B cell (primary cell): ENCODE measurements at regions of chr5 and their contacts with region 1.

Region 1: GRCh38 chr5:172697123-172698121 is 56.4 kb downstream of the NEURL1B start:
- DNase-seq: peak; percentile 88
- ATAC-seq: peak; percentile 97
- H3K4me3 ChIP-seq: peak overlapping the region; percentile 3 to 73 (median 64)
- H3K4me3 Mint-ChIP-seq: peak overlapping the region; percentile 92
- H3K27ac ChIP-seq: peak overlapping the region; percentile 53 to 57
- H3K27ac Mint-ChIP-seq: peak overlapping the region; percentile 87
- H3K4me1 ChIP-seq: peaks cover 13 to 23% of the 10 kb centered on the region in 2 donors
- H3K4me1 Mint-ChIP-seq: peaks cover 19% of the 10 kb centered on the region
- H3K27me3 ChIP-seq: peaks cover 0 to 16% (median 7%) of the 10 kb centered on the region in 4 experiments
- H3K27me3 Mint-ChIP-seq: peaks cover 21% of the 10 kb centered on the region
- CTCF ChIP-seq: peak; percentile 86

Region 2: DNA sequence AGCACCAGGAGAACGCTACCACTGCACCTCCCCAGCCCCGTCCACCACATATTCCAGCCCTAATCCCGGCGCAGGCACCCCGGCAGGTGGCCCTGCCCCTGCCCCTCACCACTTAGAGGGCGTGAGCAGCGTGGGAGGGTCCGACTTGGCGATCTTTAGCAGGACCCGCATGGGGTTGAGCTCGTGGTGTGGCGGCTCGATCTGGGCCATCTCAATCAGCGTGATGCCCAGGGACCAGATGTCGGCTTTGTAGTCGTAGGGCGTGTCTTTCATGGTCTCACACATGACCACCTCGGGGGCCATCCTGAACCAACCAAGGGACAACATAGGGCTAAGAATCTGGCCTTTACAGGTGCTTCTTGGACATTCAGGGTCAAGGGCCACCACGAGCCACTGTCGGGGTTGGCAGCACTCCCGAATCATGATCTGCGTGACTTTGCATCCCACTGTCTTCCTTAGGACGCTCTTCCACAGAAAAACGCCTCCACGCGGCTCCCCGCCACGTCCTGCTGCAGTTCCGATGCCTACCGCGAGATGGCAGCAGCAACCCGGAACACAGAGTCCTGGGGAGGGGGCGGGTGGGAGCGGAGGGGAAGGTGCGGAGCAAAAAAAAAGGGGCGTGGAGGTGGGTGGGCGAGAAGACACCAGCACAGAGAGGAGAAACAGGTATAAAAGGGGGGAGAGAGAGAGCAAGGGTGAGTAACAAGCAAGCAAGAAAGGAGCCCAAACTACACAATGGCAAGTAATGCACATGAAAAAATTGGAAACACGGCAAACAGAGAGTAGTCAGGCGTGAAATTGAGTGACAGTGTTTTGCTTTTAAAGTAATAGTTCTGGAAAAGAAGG is 590.7 kb before region 1 on chr5:
- CTCF ChIA-PET with region 1: interaction called, 4 read pairs
- POLR2A ChIA-PET with region 1: no interaction called
- intact Hi-C with region 1: loop called (anchors 10 kb)
- DNase-seq: peak; percentile 76
- ATAC-seq: no peak
- H3K4me3 ChIP-seq: no peak overlapping the region
- H3K4me3 Mint-ChIP-seq: no peak overlapping the region
- H3K27ac ChIP-seq: peak overlapping the region in 1 of 2 donors; percentile 41
- H3K27ac Mint-ChIP-seq: peak overlapping the region; percentile 70
- H3K4me1 ChIP-seq: peaks cover 31 to 40% of the 10 kb centered on the region in 2 donors
- H3K4me1 Mint-ChIP-seq: peaks cover 35% of the 10 kb centered on the region
- H3K27me3 ChIP-seq: no peaks in the 10 kb centered on the region
- H3K27me3 Mint-ChIP-seq: no peaks in the 10 kb centered on the region
- CTCF ChIP-seq: peak; percentile 92

Region 3: DNA sequence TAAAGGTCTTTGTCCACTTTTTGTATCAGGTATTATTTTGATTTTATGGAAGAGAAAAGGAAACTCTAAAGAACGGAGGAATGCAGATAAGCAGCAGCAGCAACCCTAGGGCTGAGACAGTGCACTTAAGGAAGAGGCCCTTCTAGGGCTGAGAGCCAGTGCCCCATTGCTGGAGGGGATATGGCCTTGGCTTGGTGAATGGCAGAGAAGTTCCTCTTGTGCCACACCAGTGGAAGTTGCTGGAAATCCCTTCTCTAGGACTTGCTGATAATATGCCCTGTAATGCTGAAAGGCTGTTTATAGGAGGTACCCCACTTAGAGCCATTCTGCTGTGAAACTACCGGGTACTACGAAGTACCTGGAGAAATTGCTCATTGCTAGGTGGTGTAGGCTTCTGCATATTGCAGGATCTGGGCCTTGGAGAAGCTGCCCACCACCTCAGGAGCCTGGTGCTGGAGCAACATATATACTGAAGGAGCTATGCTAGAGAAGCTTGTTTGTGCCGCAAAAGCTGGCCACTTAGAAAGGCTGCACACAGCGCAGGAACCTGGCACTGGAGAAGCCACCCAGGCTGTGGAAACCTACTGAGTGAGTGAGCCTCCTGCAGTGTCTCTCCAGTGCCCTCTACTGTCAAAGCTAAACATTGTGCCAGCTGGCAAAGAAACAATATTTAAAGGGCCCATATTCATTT is 404.2 kb before region 1 on chr5:
- CTCF ChIA-PET with region 1: interaction called, 3 read pairs
- POLR2A ChIA-PET with region 1: no interaction called
- intact Hi-C with region 1: loop called (anchors 10 kb)
- DNase-seq: peak; percentile 71
- ATAC-seq: peak; percentile 99
- H3K4me3 ChIP-seq: no peak overlapping the region
- H3K4me3 Mint-ChIP-seq: no peak overlapping the region
- H3K27ac ChIP-seq: no peak overlapping the region
- H3K27ac Mint-ChIP-seq: no peak overlapping the region
- H3K4me1 ChIP-seq: no peaks in the 10 kb centered on the region
- H3K4me1 Mint-ChIP-seq: peaks cover 3% of the 10 kb centered on the region
- H3K27me3 ChIP-seq: no peaks in the 10 kb centered on the region
- H3K27me3 Mint-ChIP-seq: peaks cover 8% of the 10 kb centered on the region
- CTCF ChIP-seq: peak; percentile 85

Region 4: DNA sequence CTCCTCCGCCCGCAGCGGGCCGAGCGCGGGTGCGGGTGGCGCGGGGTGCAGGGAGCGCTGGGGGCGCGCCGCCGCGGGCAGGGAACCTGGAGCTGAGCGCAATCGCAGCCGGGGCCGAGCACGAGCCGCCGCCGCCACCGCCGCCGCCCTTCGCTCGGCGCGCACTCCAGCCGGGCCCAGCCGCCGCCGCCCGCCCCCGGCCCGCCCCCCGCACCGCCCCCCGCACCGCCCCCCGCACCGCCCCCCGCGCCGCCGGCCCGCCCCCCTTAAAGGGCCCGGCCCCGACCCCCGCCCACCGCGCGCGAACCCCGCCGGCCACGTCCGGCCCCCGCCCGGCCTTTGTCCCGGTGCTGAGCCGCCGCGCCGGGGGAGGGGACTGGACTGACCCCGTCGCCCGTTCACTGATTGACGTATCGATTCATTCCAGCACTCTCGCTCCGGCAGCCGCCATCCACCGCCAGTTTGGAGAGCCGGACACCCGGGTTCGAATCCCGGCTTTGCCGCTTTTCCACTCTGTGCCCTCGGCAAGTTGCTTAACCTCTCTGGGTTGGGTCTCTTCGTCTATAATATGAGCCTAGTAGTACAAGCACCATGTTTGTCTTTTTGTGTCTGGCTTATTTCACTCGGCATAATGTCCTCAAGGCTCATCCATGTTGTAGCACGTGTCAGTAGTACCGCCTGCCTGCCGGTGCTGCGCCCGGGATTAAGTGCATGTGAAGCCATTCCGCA is 242.9 kb before region 1 on chr5 and contains the start of gene SH3PXD2B:
- CTCF ChIA-PET with region 1: interaction called, 53 read pairs
- POLR2A ChIA-PET with region 1: no interaction called
- intact Hi-C with region 1: no loop called
- DNase-seq: peak; percentile 47
- ATAC-seq: peak; percentile 76
- H3K4me3 ChIP-seq: peak within 1 kb of the TSS in 4 of 5 experiments; percentile 17 to 52 (median 47)
- H3K4me3 Mint-ChIP-seq: peak within 1 kb of the TSS; percentile 84
- H3K27ac ChIP-seq: no peak within 1 kb of the TSS
- H3K27ac Mint-ChIP-seq: no peak within 1 kb of the TSS
- H3K4me1 ChIP-seq: peaks cover 7 to 8% of the 10 kb centered on the region in 2 donors
- H3K4me1 Mint-ChIP-seq: peaks cover 12% of the 10 kb centered on the region
- H3K27me3 ChIP-seq: peaks cover 0 to 52% (median 19%) of the 10 kb centered on the region in 4 experiments
- H3K27me3 Mint-ChIP-seq: peaks cover 59% of the 10 kb centered on the region
- CTCF ChIP-seq: no peak
- total RNA-seq, gene SH3PXD2B: not detected in 2 replicates

Region 5: GRCh38 chr5:172479044-172479783 is 218.2 kb before region 1 on chr5:
- CTCF ChIA-PET with region 1: interaction called, 23 read pairs
- POLR2A ChIA-PET with region 1: no interaction called
- intact Hi-C with region 1: no loop called
- DNase-seq: peak; percentile 54
- ATAC-seq: peak; percentile 56
- H3K4me3 ChIP-seq: no peak overlapping the region
- H3K4me3 Mint-ChIP-seq: no peak overlapping the region
- H3K27ac ChIP-seq: no peak overlapping the region
- H3K27ac Mint-ChIP-seq: no peak overlapping the region
- H3K4me1 ChIP-seq: no peaks in the 10 kb centered on the region
- H3K4me1 Mint-ChIP-seq: no peaks in the 10 kb centered on the region
- H3K27me3 ChIP-seq: peaks cover 0 to 3% (median under 1%) of the 10 kb centered on the region in 4 experiments
- H3K27me3 Mint-ChIP-seq: peaks cover 6% of the 10 kb centered on the region
- CTCF ChIP-seq: peak; percentile 42

Region 6: DNA sequence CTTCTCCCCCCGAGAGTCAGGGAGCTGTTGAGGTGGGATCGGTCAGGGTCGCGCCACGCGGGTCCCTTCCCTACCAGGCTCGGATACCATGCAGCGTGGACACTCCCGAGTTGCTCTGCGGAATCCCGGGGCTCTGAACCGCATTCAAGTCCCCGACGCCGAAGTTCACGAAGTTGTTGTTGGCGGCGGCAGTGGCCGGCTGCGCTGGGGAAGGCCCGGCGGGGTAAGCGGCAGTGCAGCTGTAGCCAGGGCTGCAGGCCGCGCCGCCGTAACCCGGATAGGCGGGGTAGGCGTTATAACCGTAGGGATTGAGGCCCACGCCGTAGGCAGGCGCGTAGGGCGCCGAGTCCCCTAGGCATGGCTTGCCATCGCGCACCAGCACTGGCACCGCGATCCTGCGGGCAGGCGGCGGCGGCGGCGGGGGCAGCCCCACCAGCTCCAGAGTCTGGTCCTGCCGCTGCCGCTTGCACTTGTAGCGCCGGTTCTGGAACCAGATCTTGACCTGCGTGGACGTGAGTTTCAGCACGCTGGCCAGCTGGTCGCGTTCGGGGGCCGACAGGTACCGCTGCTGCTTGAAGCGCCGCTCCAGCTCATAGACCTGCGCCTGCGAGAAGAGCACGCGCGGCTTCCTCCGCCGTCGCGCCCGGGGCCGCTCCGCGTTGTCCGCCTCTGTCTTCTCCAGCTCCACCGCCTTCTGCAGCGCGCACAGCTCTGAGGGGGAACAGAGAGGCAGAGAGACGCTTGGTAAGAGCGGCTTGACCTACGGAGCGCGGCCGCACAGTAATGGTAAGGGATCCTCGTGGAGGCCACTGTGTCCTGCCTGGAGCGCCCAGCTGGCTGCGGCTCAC is 535.3 kb after region 1 on chr5:
- CTCF ChIA-PET with region 1: no interaction called
- POLR2A ChIA-PET with region 1: no interaction called
- intact Hi-C with region 1: no loop called
- DNase-seq: peak; percentile 31
- ATAC-seq: no peak
- H3K4me3 ChIP-seq: no peak overlapping the region
- H3K4me3 Mint-ChIP-seq: no peak overlapping the region
- H3K27ac ChIP-seq: no peak overlapping the region
- H3K27ac Mint-ChIP-seq: no peak overlapping the region
- H3K4me1 ChIP-seq: peaks cover 14 to 47% of the 10 kb centered on the region in 2 donors
- H3K4me1 Mint-ChIP-seq: peaks cover 29% of the 10 kb centered on the region
- H3K27me3 ChIP-seq: peaks cover 0 to 98% (median 52%) of the 10 kb centered on the region in 4 experiments
- H3K27me3 Mint-ChIP-seq: peaks cover 74% of the 10 kb centered on the region
- CTCF ChIP-seq: no peak